PC-9 (cell line): ENCODE measurements at regions of chr12 and their contacts with region 1.

Region 1: DNA sequence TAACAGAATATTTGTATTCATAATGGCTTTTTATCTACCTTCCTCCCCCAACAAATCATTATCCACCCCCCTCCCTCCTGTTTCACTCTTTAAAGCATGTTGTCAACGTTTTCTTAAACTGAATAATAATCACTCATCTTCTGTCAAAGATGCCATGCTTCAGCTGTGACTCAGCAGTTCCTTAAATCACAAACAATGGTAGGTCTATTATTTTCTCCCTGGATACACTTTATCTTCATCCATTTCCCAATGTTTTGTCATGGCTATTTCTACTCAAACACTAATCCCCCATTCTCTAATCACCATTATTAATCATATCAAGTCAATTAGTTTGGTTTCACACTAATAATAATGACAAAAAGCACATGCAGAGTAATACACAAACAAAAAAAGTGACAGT is 6.5 kb downstream of the CLEC12B start:
- DNase-seq: peak in 1 of 2 experiments; percentile 46
- H3K4me3 ChIP-seq: no peak overlapping the region
- H3K27ac ChIP-seq: peak overlapping the region; percentile 15
- H3K4me1 ChIP-seq: 0 out of 2 replicates have a peak, but pooled peaks cover 5% of the 10 kb centered on the region
- H3K27me3 ChIP-seq: no peaks in the 10 kb centered on the region
- CTCF ChIP-seq: no peak

Region 2: GRCh38 chr12:8796831-8797626 is 1219.9 kb before region 1 on chr12:
- CTCF ChIA-PET with region 1: no interaction called
- POLR2A ChIA-PET with region 1: no interaction called
- intact Hi-C with region 1: no loop called
- DNase-seq: no peak
- H3K4me3 ChIP-seq: no peak overlapping the region
- H3K27ac ChIP-seq: no peak overlapping the region
- H3K4me1 ChIP-seq: no peaks in the 10 kb centered on the region
- H3K27me3 ChIP-seq: no peaks in the 10 kb centered on the region
- CTCF ChIP-seq: no peak

Region 3: DNA sequence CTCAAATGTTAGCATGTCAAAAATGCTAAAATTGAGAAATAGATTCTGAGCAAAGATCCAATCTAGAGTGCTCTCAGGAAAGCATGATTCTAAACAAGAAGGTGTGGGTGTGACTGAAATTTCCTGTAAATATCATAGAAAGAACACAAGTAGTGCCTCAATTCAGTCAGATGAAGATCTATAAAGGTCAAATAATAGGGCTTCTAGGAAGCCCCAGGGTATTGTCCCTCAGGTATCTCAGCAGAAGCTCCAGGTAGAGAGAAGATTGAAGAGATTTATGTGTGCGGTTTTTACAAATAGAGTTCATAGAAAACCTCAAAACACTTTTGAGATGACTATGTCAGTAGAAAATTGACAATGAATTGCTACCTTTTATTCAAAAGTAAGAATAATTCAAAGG is 303.8 kb after region 1 on chr12:
- CTCF ChIA-PET with region 1: interaction called, 14 read pairs
- POLR2A ChIA-PET with region 1: no interaction called
- intact Hi-C with region 1: no loop called
- DNase-seq: no peak
- H3K4me3 ChIP-seq: no peak overlapping the region
- H3K27ac ChIP-seq: no peak overlapping the region
- H3K4me1 ChIP-seq: no peaks in the 10 kb centered on the region
- H3K27me3 ChIP-seq: no peaks in the 10 kb centered on the region
- CTCF ChIP-seq: no peak

Region 4: DNA sequence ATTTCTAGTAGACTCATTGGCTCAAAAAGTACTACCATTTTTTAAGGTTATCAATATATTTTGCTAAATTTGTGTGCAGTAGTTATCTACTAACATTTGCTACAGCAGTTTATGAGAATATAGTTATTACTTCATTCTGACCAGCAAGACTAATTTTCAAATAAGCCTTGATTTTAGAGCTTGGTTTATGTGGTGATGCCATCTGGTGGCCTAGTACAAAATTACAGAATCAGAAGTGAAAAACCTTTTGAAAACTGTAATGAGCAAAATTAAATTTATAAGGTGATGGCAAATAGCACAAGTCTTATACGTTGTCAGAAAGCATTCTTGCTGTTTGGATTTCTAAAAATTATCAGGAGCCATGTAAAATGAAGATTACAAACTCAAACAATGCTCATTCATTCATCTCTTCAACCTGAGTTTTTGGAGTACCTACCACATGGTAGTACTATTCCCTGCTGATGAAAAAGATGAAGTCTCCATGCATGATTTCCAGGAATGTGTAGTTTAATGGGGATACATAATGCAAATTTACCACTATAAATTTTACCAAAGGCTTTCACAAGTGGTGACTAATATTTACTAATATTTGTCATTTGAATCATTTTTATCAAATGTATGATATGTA is 545.5 kb after region 1 on chr12:
- CTCF ChIA-PET with region 1: no interaction called
- POLR2A ChIA-PET with region 1: no interaction called
- intact Hi-C with region 1: loop called (anchors 10 kb)
- DNase-seq: peak in 1 of 2 experiments; percentile 28
- H3K4me3 ChIP-seq: no peak overlapping the region
- H3K27ac ChIP-seq: no peak overlapping the region
- H3K4me1 ChIP-seq: no peaks in the 10 kb centered on the region
- H3K27me3 ChIP-seq: no peaks in the 10 kb centered on the region
- CTCF ChIP-seq: peak; percentile 87